Activated B cell treated with CpG ODN at 0.5 μM for 24 hours (primary cell): ENCODE measurements at regions of chr10 and their contacts with region 1.

Region 1: DNA sequence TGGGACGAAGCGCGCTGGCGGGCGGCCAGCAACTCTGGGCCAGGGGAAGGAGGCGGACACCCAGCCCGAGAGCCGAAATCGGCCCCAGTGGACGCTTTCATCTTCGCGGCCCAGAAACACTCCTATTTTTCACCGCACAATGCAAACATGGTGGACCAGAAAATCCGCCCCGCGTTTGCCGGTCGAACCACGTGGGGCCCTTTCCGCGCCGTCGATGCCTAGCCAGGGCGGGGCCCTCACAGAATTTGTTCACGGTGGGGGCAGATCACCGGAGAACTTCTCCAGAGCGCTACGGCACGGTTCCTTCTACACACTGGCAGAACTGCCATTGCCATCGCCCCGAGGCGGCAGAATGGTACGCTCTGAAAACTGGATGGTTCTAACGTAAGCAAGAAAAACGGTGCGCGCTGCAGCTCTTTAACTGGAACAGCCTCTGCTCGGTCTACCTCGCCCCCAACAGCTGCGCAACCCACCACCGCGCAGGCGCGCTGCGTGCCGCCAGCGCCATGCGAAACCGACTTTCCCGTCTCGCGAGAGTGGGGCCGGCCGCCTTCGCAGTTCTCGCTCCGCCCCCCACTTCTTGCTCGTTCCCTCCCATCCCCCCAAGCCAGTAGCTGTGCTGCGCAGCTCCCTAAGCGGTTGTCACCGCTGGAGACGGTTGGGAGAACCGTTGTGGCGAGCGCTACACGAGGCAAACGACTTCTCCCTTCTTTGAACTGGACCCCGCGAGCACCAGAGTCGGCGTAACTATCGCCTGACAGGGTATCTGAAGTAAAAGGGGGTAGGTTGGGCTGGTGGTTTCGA is at the start of gene HNRNPH3:
- DNase-seq: peak; percentile 98
- ATAC-seq: peak; percentile 86
- H3K4me3 Mint-ChIP-seq: peak within 1 kb of the TSS; percentile 99
- H3K27ac Mint-ChIP-seq: peak within 1 kb of the TSS; percentile 99
- H3K4me1 Mint-ChIP-seq: peaks cover 67% of the 10 kb centered on the region
- H3K27me3 Mint-ChIP-seq: no peaks in the 10 kb centered on the region
- CTCF ChIP-seq: no peak
- total RNA-seq, gene HNRNPH3: 101 and 113 TPM in 2 replicates

Region 2: DNA sequence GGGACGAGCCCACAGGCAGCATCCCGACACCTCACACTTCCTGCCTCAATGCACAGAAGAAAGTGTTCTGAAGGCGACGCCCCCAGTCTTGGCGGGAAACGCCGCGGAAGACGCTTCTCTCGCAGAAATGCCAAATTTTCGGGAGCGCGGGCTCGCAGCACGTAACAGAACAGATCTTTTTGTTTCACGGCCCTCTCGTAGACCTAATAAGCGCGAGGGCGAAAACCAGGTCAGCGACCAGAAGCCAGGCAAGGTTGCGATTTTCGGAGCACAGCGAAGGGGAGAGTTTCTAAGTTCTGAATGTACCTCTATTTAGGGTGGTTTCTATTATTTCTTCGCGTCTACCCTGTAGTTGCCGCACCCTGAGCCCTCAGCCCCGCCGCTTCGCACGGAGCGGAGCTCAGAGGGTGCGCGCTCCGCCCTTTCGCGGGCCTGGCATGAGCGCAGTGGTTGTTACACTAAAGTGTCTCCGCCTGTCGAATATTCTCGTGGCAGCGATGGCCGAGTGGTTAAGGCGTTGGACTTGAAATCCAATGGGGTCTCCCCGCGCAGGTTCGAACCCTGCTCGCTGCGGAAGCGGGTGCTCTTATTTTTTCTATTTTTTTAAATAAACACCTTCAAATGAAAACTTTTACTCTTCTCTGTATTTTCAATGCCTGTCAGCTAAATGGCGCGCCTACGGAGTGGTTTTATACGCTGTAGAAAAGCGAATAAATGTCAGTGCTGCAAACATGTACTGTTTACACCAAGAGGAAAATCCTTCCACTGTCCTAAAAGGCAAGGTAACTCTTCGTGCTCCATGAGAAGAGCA is 567.4 kb before region 1 on chr10:
- CTCF ChIA-PET with region 1: no interaction called
- POLR2A ChIA-PET with region 1: interaction called, 7 read pairs
- intact Hi-C with region 1: loop called (anchors 1 kb)
- DNase-seq: peak; percentile 98
- ATAC-seq: peak; percentile 78
- H3K4me3 Mint-ChIP-seq: peak overlapping the region; percentile 94
- H3K27ac Mint-ChIP-seq: peak overlapping the region; percentile 99
- H3K4me1 Mint-ChIP-seq: peaks cover 31% of the 10 kb centered on the region
- H3K27me3 Mint-ChIP-seq: peaks cover 4% of the 10 kb centered on the region
- CTCF ChIP-seq: no peak

Region 3: GRCh38 chr10:67884313-67884841 is 447.3 kb before region 1 on chr10 and contains the start of gene SIRT1:
- CTCF ChIA-PET with region 1: no interaction called
- POLR2A ChIA-PET with region 1: interaction called, 28 read pairs
- intact Hi-C with region 1: loop called (anchors 1 kb)
- DNase-seq: peak; percentile 97
- ATAC-seq: peak; percentile 81
- H3K4me3 Mint-ChIP-seq: peak within 1 kb of the TSS; percentile 92
- H3K27ac Mint-ChIP-seq: peak within 1 kb of the TSS; percentile 96
- H3K4me1 Mint-ChIP-seq: peaks cover 31% of the 10 kb centered on the region
- H3K27me3 Mint-ChIP-seq: no peaks in the 10 kb centered on the region
- CTCF ChIP-seq: no peak
- total RNA-seq, gene SIRT1: 30.1 and 31.6 TPM in 2 replicates

Region 4: DNA sequence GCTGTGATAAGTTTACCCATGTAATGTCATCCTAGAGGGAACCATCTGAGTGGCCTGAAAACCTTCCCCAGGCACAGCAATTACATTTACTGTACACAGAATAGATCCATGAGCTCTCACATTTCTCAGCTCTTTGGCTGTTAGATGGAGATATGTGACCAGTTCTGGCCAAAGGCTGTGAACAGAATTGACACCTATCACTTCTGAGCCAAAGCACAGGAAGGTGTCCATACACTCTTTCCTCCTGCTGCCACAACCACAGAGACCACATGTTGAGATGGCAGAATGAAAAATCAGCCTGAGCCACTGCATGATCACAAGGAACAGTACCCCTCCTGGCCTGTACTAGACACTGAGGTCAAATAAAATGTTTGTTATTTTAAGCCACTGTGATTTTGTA is 55.4 kb before region 1 on chr10:
- CTCF ChIA-PET with region 1: no interaction called
- POLR2A ChIA-PET with region 1: no interaction called
- intact Hi-C with region 1: no loop called
- DNase-seq: no peak
- ATAC-seq: no peak
- H3K4me3 Mint-ChIP-seq: no peak overlapping the region
- H3K27ac Mint-ChIP-seq: no peak overlapping the region
- H3K4me1 Mint-ChIP-seq: no peaks in the 10 kb centered on the region
- H3K27me3 Mint-ChIP-seq: no peaks in the 10 kb centered on the region
- CTCF ChIP-seq: no peak

Region 5: GRCh38 chr10:68301790-68302502 is 29.7 kb before region 1 on chr10:
- CTCF ChIA-PET with region 1: interaction called, 6 read pairs
- POLR2A ChIA-PET with region 1: interaction called, 25 read pairs
- intact Hi-C with region 1: loop called (anchors 1 kb)
- DNase-seq: no peak
- ATAC-seq: peak; percentile 62
- H3K4me3 Mint-ChIP-seq: no peak overlapping the region
- H3K27ac Mint-ChIP-seq: peak overlapping the region; percentile 90
- H3K4me1 Mint-ChIP-seq: peaks cover 31% of the 10 kb centered on the region
- H3K27me3 Mint-ChIP-seq: no peaks in the 10 kb centered on the region
- CTCF ChIP-seq: no peak

Region 6: DNA sequence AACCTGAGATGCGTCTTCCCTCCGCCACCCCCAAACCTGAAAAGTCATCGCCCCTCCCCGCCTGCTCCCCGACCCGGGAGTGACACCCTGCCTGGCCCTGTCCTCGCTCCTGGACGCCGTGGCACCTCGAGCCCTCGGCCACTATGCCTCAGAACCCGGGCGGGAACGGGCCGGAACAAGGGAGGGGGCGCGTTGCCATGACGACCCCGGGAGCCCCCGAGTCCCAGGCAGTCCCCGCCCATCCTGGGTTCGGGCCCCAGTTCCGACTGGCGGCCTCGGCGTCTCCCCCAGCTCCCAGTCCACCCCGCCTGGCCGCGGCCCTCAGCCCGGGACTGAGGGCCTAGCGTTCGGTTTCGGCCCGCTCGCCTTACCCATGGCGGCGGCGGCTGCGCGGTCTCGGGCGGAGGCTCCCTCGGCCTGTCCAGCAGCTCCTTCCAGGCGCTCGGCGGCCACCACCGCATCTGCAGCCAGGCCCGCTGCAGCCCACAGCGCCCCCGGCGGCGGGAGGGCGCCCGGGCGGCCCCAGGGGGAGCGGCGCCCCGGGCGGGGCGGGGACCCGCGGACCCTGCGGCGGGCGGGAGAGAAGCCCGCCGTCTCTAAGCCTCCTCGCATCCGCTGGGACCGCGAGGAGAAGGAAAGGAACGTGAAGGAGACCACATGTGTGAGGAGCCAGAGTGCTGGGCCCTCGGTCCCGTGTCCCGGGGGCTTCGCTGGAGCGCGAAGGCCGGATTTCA is 75.3 kb after region 1 on chr10 and contains the start of gene RUFY2:
- CTCF ChIA-PET with region 1: interaction called, 3 read pairs
- POLR2A ChIA-PET with region 1: interaction called, 32 read pairs
- intact Hi-C with region 1: loop called (anchors 1 kb)
- DNase-seq: peak; percentile 91
- ATAC-seq: peak; percentile 92
- H3K4me3 Mint-ChIP-seq: peak within 1 kb of the TSS; percentile 92
- H3K27ac Mint-ChIP-seq: peak within 1 kb of the TSS; percentile 85
- H3K4me1 Mint-ChIP-seq: peaks cover 15% of the 10 kb centered on the region
- H3K27me3 Mint-ChIP-seq: no peaks in the 10 kb centered on the region
- CTCF ChIP-seq: no peak
- total RNA-seq, gene RUFY2: 23.1 and 28.5 TPM in 2 replicates

Region 7: DNA sequence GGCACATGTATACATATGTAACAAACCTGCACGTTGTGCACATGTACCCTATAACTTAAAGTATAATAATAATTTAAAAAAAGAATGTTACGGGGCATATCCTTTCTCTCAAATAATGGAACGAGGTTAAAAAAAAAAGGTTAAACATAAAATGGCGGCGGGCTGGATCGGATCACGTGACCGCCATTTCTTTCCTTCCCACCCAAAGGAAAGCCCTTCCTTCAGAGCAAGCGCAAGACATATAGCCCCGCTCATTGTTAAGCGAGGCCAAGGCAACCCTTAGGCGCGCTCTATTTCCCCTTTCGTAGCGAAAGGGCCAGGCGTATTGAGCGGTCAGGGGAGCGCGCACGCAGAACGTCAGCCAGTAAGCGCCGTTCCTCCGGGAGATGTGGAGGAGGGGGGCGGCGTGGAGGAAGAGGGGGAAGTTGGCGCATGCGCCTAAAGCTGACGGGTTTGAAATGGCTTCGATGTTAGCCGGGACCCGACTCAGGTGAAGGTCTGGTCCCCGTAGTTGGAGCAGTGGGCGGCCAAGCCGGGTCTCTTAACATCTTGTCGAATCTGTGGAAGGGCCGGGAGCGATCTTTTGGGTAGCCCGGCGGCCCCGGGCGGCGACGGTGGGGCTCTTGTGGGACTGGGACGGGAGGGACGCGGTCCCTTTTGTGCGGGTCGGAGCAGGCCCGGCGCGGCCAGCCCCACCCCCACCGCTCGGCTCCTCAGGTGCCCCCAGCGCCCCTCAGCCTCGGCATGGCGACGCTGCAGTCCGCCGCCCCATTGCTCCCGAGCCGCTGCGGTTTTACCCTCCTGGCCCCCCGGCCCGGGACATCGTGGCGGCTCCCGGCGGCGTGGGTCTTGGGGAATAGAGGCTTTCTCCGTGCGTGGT is 389.4 kb after region 1 on chr10 and contains the start of gene CCAR1:
- CTCF ChIA-PET with region 1: no interaction called
- POLR2A ChIA-PET with region 1: interaction called, 11 read pairs
- intact Hi-C with region 1: loop called (anchors 5 kb)
- DNase-seq: peak; percentile 93
- ATAC-seq: peak; percentile 98
- H3K4me3 Mint-ChIP-seq: peak within 1 kb of the TSS; percentile 92
- H3K27ac Mint-ChIP-seq: peak within 1 kb of the TSS; percentile 98
- H3K4me1 Mint-ChIP-seq: peaks cover 14% of the 10 kb centered on the region
- H3K27me3 Mint-ChIP-seq: no peaks in the 10 kb centered on the region
- CTCF ChIP-seq: no peak
- total RNA-seq, gene CCAR1: 88.2 and 98.8 TPM in 2 replicates

Region 8: GRCh38 chr10:69087590-69088470 is 756.2 kb after region 1 on chr10 and contains the start of gene SRGN:
- CTCF ChIA-PET with region 1: no interaction called
- POLR2A ChIA-PET with region 1: interaction called, 3 read pairs
- intact Hi-C with region 1: loop called (anchors 5 kb)
- DNase-seq: peak; percentile 26
- ATAC-seq: peak; percentile 71
- H3K4me3 Mint-ChIP-seq: peak within 1 kb of the TSS; percentile 84
- H3K27ac Mint-ChIP-seq: peak within 1 kb of the TSS; percentile 95
- H3K4me1 Mint-ChIP-seq: peaks cover 56% of the 10 kb centered on the region
- H3K27me3 Mint-ChIP-seq: no peaks in the 10 kb centered on the region
- CTCF ChIP-seq: no peak
- total RNA-seq, gene SRGN: 91.4 and 95.5 TPM in 2 replicates